ENCODE measurements at regions of chr9 and their contacts with region 1.

Region 1: DNA sequence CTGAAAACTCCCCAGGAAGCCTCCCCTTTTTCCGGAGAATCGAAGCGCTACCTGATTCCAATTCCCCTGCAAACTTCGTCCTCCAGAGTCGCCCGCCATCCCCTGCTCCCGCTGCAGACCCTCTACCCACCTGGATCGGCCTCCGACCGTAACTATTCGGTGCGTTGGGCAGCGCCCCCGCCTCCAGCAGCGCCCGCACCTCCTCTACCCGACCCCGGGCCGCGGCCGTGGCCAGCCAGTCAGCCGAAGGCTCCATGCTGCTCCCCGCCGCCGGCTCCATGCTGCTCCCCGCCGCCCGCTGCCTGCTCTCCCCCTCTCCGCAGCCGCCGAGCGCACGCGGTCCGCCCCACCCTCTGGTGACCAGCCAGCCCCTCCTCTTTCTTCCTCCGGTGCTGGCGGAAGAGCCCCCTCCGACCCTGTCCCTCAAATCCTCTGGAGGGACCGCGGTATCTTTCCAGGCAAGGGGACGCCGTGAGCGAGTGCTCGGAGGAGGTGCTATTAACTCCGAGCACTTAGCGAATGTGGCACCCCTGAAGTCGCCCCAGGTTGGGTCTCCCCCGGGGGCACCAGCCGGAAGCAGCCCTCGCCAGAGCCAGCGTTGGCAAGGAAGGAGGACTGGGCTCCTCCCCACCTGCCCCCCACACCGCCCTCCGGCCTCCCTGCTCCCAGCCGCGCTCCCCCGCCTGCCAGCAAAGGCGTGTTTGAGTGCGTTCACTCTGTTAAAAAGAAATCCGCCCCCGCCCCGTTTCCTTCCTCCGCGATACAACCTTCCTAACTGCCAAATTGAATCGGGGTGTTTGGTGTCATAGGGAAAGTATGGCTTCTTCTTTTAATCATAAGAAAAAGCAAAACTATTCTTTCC is 19.4 kb downstream of the CDKN2A start:
- DNase-seq: no peak
- H3K4me3 Mint-ChIP-seq: peak overlapping the region; percentile 83
- H3K27ac Mint-ChIP-seq: peak overlapping the region; percentile 50
- H3K4me1 Mint-ChIP-seq: peaks cover 22% of the 10 kb centered on the region
- H3K27me3 Mint-ChIP-seq: peaks cover 87% of the 10 kb centered on the region

Region 2: DNA sequence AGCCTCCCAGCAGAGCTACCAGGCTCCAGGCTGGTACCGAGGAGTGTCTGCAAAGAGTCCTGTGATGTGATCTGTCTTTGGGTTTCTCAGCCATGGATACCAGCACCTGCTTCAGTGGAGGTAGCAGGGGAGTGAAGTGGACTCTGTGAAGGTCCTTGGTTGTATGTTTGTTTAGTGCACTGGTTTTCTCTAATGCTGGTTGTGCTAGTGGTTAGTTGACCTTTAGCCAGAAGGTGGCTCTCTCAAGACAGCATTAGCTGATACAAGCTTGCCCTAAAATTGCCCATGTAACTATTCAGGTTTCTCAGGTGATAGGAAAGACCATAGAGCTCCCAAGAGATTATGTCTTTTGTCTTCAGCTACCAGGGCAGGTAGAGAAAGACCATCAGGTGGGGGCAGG is 85.1 kb before region 1 on chr9:
- intact Hi-C with region 1: no loop called
- DNase-seq: no peak
- H3K4me3 Mint-ChIP-seq: no peak overlapping the region
- H3K27ac Mint-ChIP-seq: no peak overlapping the region
- H3K4me1 Mint-ChIP-seq: no peaks in the 10 kb centered on the region
- H3K27me3 Mint-ChIP-seq: no peaks in the 10 kb centered on the region

Region 3: DNA sequence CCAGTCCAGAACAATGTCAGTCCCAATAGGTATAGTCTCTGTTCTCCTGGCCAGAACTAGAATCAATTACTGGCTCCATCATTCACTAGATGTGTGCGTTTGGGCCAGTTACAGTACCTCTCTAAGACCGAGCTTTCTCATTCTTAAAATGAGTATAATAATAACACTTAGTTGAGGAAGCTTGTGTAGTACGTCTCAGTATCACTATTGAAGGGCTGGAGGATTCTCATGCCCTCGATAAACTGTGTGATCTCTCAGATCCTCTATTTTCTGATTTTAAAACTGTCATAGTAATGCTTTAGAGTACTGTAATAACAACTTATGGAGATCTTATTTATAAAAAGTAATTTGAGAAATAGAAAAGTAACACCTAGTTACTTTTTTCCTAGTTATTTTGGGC is 31.3 kb before region 1 on chr9:
- intact Hi-C with region 1: no loop called
- DNase-seq: no peak
- H3K4me3 Mint-ChIP-seq: no peak overlapping the region
- H3K27ac Mint-ChIP-seq: no peak overlapping the region
- H3K4me1 Mint-ChIP-seq: no peaks in the 10 kb centered on the region
- H3K27me3 Mint-ChIP-seq: peaks cover 39% of the 10 kb centered on the region

Region 4: GRCh38 chr9:21989440-21990189 is 14.8 kb after region 1 on chr9:
- intact Hi-C with region 1: loop called (anchors 1 kb)
- DNase-seq: no peak
- H3K4me3 Mint-ChIP-seq: no peak overlapping the region
- H3K27ac Mint-ChIP-seq: no peak overlapping the region
- H3K4me1 Mint-ChIP-seq: peaks cover 36% of the 10 kb centered on the region
- H3K27me3 Mint-ChIP-seq: peaks cover 42% of the 10 kb centered on the region

Region 5: GRCh38 chr9:22037954-22038690 is 63.3 kb after region 1 on chr9:
- intact Hi-C with region 1: loop called (anchors 2 kb)
- DNase-seq: no peak
- H3K4me3 Mint-ChIP-seq: no peak overlapping the region
- H3K27ac Mint-ChIP-seq: no peak overlapping the region
- H3K4me1 Mint-ChIP-seq: peaks cover 46% of the 10 kb centered on the region
- H3K27me3 Mint-ChIP-seq: peaks cover 26% of the 10 kb centered on the region

Region 6: DNA sequence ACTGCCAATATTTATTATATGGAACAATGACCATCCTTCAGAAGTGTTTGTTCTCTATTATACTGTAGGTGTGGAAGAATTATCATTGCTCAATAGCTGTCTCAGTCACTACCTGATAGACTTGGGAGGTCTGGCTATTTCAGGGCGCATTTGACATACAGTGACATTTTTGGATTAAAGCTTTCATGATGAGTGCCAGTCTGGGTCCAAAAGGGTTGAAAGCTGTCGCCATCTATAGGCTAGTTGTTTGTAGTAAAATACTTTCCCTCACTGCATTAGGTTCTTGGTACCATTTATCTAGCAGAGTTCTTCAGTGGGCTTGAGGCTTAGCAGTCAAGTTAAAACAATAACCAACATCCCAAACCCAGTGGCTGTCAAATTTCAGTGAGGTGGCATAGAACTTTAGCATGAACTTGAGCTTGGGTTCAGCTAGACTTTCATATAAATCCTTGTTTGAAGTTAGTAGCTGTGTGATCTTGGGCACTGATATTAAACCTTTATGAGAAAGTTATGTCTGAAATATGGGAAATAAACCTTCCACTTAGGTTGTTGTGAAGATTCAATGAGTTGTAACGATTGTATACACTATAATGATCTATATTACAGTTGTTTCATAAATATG is 144.9 kb after region 1 on chr9:
- intact Hi-C with region 1: loop called (anchors 2 kb)
- DNase-seq: no peak
- H3K4me3 Mint-ChIP-seq: no peak overlapping the region
- H3K27ac Mint-ChIP-seq: no peak overlapping the region
- H3K4me1 Mint-ChIP-seq: peaks cover 16% of the 10 kb centered on the region
- H3K27me3 Mint-ChIP-seq: peaks cover 68% of the 10 kb centered on the region

Region 7: DNA sequence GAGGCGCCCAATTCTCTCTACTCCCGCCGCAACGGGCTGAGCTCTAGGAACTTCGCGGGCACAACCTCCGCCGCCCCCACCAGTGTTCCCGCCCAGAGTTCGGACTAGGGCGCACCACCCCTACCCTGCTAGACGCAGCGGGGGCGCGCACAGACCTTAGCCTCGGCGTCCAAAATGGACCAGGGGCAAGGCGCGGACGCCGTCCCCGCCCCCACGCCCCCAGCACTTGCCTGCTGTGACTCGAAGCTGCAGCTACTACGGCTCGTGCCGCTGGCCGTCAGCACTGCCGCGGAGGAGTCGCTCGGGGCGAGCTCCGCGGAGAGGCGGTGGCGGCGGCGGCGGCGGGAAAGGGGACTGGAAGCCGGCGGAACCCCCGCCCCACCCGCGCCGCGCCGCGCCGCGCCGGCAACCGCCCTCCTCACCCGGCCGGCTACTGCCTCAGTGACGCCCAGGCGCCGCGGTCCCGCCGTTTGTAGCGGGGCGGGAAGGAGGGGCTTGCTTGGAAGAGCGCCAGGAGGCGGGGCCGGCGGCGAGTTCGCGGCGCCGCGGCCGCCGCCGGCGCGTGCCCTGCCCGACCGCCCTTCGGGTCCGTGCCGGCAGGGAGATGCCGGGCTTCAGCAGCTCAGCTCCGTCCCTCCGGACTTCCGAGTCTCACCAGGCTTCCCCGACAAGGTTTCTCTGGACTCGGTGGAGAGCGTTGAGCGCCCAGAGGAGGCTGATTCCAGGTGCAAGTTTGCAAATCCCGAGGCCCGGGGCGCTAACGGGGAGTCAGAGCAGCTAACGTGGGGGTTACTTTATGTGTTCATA is 1846.8 kb after region 1 on chr9:
- intact Hi-C with region 1: loop called (anchors 5 kb)
- DNase-seq: no peak
- H3K4me3 Mint-ChIP-seq: no peak overlapping the region
- H3K27ac Mint-ChIP-seq: no peak overlapping the region
- H3K4me1 Mint-ChIP-seq: no peaks in the 10 kb centered on the region
- H3K27me3 Mint-ChIP-seq: peaks cover 14% of the 10 kb centered on the region

Measured in activated T-helper 2 cell treated with anti-CD3 and anti-CD28 coated beads, Interferon-gamma antibody, Interleukin-2, Interleukin-4, amounts not matched to agents 10 μg/mL and 5 μg/mL and 100 μg/mL, durations not matched to agents 14 hours and 24 hours and 36 hours (primary cell).